K562 (cell line): ENCODE measurements at regions of chr17 and their contacts with region 1.

Region 1: DNA sequence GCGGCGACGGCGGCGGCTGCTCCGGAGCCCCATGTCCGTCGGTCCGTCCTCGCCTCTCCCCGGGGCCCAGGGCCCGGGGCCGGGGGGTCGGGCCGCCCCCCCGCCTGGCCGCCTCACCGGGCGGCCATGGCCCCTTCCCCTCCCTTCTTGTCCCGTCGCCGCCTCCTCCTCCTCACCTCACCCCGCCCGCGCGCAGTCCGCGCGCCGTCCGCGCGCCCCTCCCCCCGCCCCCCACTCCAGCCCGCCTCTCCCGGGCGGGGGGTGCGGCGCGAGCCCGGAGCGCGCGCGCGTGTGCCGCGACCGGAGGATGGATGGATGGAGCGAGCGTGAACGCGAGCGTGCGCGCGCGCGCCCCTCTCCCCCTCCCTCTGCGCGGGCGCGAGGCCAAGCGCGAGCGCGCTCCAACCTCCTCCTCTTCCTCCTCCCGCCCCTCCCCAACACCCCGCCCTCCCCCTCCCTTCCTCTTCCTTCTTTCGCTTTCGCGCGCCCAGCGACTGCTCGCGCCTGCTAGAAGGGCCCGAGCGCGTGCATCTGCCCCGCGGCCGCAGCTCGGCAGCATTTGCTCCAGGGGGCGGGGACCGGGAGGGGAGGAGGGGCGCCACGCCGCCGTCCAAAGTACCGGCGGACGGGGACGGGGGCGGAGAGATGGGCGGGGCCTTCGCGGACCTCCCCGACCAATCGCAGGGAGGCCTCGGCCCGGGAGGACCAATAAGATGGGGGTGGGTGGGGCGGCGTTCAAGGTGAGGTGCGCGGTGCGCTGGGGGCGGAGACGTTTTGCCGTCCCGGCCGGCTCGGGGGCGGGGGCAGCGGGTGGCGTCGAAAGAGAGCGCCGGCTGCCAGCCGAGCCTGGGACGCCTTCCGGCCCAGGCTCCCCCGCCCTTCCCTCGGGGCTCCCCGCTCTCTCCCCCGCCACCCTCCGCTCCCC is at the start of gene ATXN7L3:
- DNase-seq: peak; percentile 94 to 100 (median 96)
- ATAC-seq: peak; percentile 90
- H3K4me3 ChIP-seq: peak within 1 kb of the TSS; percentile 79
- H3K27ac ChIP-seq: peak within 1 kb of the TSS; percentile 91
- H3K4me1 ChIP-seq: peaks cover 36 to 40% of the 10 kb centered on the region in 2 experiments
- H3K27me3 ChIP-seq: no peaks in the 10 kb centered on the region
- CTCF ChIP-seq: no peak
- EP300 ChIP-seq: no peak
- POLR2A ChIP-seq: no peak
- RAD21 ChIP-seq: no peak
- polyA plus RNA-seq, gene ATXN7L3: 0.62 to 0.90 TPM

Region 2: DNA sequence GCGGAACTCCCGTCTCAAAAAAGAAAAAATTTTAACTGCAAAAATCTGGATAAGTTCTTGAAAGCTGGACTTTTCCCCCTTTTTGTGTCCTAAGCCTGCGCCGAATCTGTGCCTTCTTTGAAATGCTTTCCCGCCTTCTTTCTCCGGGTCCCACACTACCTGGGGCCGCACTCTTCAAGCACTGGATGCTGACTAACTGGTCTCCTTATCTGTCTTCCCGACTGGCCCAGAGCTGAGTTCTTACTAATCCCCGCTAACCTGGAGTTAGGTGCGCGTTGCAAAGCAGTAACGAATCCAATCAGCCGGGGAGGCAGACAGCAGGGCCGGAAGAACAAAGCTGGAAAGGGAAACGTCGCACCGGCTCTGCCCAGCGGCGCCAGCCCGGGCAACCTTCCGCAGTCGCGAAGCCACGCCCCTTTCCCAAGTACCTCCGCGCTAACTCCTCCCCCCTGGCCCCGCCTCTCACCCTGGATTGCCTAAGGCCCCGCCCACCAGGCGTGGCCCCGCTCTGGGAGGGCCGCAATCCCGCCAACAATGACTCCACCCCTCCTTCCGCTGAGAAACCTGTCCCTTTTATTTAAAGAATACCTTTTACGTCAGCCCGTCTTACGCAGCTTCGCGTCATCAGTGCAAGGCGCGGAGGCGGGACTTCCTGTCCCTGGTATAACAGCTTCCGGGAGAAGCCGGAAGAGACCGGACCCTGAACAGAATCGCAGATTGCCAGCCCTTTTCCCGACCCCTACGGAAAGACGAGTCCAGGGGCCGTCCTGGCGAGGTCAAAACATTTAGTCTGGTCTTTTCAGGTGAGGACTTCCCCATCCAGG is 13.3 kb before region 1 on chr17 and contains the start of gene TMUB2:
- CTCF ChIA-PET with region 1: no interaction called
- POLR2A ChIA-PET with region 1: interaction called, 14 read pairs
- in situ Hi-C with region 1: no loop called
- intact Hi-C with region 1: no loop called
- DNase-seq: peak; percentile 99 to 100 (median 99)
- ATAC-seq: peak; percentile 89
- H3K4me3 ChIP-seq: peak within 1 kb of the TSS; percentile 93
- H3K27ac ChIP-seq: peak within 1 kb of the TSS; percentile 97
- H3K4me1 ChIP-seq: peaks cover 13 to 23% of the 10 kb centered on the region in 2 experiments
- H3K27me3 ChIP-seq: no peaks in the 10 kb centered on the region
- CTCF ChIP-seq: no peak
- EP300 ChIP-seq: no peak
- POLR2A ChIP-seq: peak; percentile 93
- RAD21 ChIP-seq: no peak
- polyA plus RNA-seq, gene TMUB2: 4.1 to 6.2 TPM

Region 3: GRCh38 chr17:44344939-44345453 is 145.2 kb after region 1 on chr17 and contains the start of gene GRN:
- CTCF ChIA-PET with region 1: no interaction called
- POLR2A ChIA-PET with region 1: no interaction called
- in situ Hi-C with region 1: no loop called
- intact Hi-C with region 1: loop called (anchors 1 kb)
- DNase-seq: peak; percentile 96 to 99 (median 99)
- ATAC-seq: peak; percentile 100
- H3K4me3 ChIP-seq: peak within 1 kb of the TSS; percentile 65
- H3K27ac ChIP-seq: peak within 1 kb of the TSS; percentile 44
- H3K4me1 ChIP-seq: peaks cover 14 to 33% of the 10 kb centered on the region in 2 experiments; a peak in 3 of 5 replicates
- H3K27me3 ChIP-seq: no peaks in the 10 kb centered on the region; a peak in 1 of 5 replicates
- CTCF ChIP-seq: no peak
- EP300 ChIP-seq: 0 out of 2 replicates have a peak, but pooled peaks have one; percentile 28
- POLR2A ChIP-seq: peak; percentile 78
- RAD21 ChIP-seq: no peak
- polyA plus RNA-seq, gene GRN: 5.4 to 5.9 TPM

Region 4: DNA sequence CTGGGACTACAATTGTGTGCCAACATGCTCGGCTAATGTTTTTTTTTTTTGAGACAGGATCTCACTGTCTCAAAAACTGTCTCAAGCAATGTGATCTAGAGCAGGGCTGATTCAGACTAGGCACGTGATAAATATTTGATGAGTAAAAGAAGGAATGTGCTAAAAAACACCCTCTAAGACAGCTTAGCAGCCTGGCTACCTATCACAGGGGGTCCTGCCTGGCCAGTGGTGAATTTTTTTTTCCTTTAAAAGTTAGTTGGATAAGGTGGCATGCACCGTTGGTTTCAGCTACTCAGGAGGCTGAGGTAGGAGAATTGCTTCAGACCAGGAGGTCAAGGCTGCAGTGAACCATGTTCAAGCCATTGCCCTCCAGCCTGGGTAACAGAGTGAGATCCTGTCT is 318.2 kb after region 1 on chr17:
- CTCF ChIA-PET with region 1: no interaction called
- POLR2A ChIA-PET with region 1: no interaction called
- in situ Hi-C with region 1: loop called (anchors 5 kb)
- intact Hi-C with region 1: no loop called
- DNase-seq: no peak
- ATAC-seq: no peak
- H3K4me3 ChIP-seq: no peak overlapping the region
- H3K27ac ChIP-seq: no peak overlapping the region
- H3K4me1 ChIP-seq: peaks cover 3 to 4% of the 10 kb centered on the region in 2 experiments; a peak in 3 of 5 replicates
- H3K27me3 ChIP-seq: no peaks in the 10 kb centered on the region
- CTCF ChIP-seq: no peak
- EP300 ChIP-seq: no peak
- POLR2A ChIP-seq: no peak
- RAD21 ChIP-seq: no peak